MCF 10A (cell line): ENCODE measurements at regions of chr1 and their contacts with region 1.

Region 1: DNA sequence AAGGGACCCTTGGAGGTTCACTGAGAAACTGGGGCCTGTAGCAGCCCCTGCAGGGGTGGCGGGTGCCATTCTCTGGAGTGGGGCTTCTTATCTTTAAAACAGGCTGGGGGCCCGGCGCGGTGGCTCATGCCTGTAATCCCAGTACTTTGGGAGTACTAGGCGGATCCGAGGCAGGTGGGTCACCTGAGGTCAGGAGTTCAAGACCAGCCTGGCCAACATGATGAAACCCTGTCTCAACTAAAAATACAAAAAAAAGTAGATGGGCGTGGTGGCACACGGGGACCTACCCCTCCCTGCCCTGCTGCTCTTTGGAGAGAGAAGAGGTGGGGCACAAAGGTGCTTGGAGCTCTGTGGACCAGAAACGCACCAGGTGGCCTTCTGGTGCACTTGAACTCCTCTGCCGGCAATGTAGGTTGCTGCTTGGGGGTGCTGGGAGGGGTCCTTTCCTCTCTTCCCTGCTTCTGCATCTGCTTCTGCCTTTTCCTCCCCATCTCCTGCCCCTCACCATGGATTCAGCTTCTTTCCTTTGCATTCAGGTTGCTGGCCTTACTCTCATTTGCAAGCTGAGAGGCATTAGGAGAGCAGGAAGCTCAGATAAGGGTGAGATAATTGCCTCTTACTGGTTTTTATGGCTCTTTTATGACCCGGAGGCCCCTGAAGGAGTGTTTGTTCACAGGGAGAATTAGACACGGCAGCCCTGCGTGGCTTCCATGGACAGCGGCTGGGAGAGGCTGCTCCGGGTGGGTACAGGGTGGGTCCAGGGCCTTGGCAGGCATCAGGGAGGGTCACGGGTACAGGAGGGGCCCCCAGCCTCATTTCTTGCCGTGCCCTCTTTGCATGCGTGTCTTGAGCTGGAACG is 57.4 kb downstream of the ARHGEF10L start:
- DNase-seq: no peak
- H3K4me3 Mint-ChIP-seq: no peak overlapping the region
- H3K27ac Mint-ChIP-seq: no peak overlapping the region
- H3K4me1 Mint-ChIP-seq: peaks cover 18% of the 10 kb centered on the region
- H3K27me3 Mint-ChIP-seq: no peaks in the 10 kb centered on the region
- CTCF ChIP-seq: no peak

Region 2: GRCh38 chr1:17502326-17502778 is 94.5 kb before region 1 on chr1:
- CTCF ChIA-PET with region 1: interaction called, 11 read pairs
- POLR2A ChIA-PET with region 1: no interaction called
- intact Hi-C with region 1: no loop called
- DNase-seq: peak; percentile 74
- H3K4me3 Mint-ChIP-seq: no peak overlapping the region
- H3K27ac Mint-ChIP-seq: no peak overlapping the region
- H3K4me1 Mint-ChIP-seq: peaks cover 5% of the 10 kb centered on the region
- H3K27me3 Mint-ChIP-seq: peaks cover 16% of the 10 kb centered on the region
- CTCF ChIP-seq: peak; percentile 93

Region 3: DNA sequence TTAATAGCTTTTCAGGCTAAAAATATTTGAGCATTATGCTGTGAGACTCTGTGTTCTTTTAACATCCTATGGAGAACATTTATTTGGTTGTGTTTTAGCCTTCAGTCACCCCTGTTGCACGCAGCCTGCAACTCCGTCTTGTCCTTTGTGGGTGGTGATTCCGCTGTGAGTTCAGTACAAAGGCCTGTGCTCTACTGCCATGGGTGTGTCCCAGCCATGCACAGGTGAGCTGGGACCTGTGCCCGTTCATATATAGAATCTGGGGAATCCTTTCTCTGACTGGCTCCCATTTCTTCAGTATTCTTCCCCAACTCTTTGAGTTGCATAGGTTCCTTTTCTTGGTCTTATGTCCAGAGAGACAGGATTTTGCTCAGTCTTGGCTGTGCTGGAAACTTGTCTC is 219.6 kb after region 1 on chr1:
- CTCF ChIA-PET with region 1: no interaction called
- POLR2A ChIA-PET with region 1: no interaction called
- intact Hi-C with region 1: no loop called
- DNase-seq: no peak
- H3K4me3 Mint-ChIP-seq: no peak overlapping the region
- H3K27ac Mint-ChIP-seq: no peak overlapping the region
- H3K4me1 Mint-ChIP-seq: no peaks in the 10 kb centered on the region
- H3K27me3 Mint-ChIP-seq: peaks cover 57% of the 10 kb centered on the region
- CTCF ChIP-seq: no peak